Activated CD4-positive, alpha-beta T cell treated with anti-CD3 and anti-CD28 coated beads for 36 hours (primary cell): ENCODE measurements at regions of chr7 and their contacts with region 1.

Region 1: DNA sequence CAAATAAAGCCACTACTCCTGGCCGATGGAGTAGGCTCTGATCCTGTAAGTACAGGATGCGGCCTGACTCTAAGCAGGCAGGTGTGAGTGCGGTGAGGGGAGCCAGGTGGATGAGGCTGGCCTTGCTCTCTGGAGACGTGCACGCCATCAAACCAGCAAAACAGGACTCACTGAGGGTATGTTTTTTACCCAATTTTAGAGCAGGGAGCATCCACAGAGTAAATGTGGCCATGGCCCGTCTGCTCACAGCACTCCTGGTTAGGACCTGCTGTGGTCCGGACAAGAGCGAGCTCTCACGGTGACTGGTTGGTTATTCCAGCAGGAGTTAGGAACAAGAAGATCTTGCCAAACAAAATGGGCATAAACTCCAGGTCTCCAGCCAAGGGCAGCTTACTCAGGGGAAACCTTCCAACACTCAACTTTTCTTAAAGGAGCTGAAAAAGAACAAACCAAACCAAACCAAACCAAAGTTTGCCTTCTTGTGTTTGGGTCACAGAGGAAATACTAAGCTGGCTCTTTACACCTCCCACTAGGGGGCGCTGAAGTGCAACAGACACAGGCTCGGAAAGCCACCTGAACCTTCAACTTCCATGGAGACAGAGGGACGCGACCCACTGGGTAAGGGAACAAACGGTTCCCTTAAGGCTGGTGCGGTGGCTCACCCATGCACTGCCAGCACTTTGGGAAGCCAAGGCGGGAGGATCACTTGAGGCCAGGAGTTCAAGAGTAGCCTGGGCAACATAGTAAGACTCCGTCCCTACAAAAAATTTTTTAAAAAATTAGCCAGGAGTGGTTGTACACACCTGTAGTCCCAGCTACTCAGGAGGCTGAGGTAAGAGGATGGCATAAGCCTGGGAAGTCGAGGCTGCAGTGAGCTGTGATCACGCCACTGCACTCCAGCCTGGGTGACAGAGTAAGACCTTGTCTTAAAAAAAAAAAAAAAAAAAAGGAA is 122.4 kb downstream of the CLEC2L start:
- DNase-seq: peak; percentile 92
- ATAC-seq: peak; percentile 43
- H3K4me3 Mint-ChIP-seq: no peak overlapping the region
- H3K27ac Mint-ChIP-seq: peak overlapping the region; percentile 38
- H3K4me1 Mint-ChIP-seq: peaks cover 82% of the 10 kb centered on the region
- H3K27me3 Mint-ChIP-seq: no peaks in the 10 kb centered on the region

Region 2: DNA sequence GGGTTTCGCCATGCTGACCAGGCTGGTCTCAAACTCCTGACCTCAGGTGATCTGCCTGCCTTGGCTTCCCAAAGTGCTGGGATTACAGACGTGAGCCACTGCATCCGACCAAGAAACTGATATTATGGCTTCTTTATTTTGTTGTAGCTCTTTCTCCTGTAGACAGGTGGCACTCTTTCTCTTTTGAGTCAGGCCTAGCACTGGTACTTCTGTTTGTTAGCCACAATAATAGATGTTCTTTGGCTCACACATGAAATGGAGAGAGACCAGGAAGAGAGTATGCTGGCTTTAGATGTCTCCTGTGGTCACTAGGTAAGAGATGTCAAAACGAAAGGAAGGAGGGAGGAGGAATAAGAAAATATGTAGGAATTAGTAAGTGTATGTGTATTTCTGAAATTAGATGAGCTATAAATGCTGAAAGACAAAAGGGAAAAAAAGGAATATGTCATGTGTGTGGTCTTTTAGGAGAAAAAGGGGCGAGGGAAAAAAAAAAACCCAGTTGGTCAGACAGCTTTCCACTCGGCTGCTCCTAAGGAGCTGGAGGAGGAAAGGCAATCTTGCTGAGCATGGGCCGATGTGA is 43.6 kb before region 1 on chr7:
- CTCF ChIA-PET with region 1: interaction called, 15 read pairs
- POLR2A ChIA-PET with region 1: interaction called, 4 read pairs
- intact Hi-C with region 1: loop called in 1 of 2 experiments (anchors 2 kb)
- DNase-seq: no peak
- ATAC-seq: peak; percentile 83
- H3K4me3 Mint-ChIP-seq: no peak overlapping the region
- H3K27ac Mint-ChIP-seq: no peak overlapping the region
- H3K4me1 Mint-ChIP-seq: no peaks in the 10 kb centered on the region
- H3K27me3 Mint-ChIP-seq: no peaks in the 10 kb centered on the region

Region 3: DNA sequence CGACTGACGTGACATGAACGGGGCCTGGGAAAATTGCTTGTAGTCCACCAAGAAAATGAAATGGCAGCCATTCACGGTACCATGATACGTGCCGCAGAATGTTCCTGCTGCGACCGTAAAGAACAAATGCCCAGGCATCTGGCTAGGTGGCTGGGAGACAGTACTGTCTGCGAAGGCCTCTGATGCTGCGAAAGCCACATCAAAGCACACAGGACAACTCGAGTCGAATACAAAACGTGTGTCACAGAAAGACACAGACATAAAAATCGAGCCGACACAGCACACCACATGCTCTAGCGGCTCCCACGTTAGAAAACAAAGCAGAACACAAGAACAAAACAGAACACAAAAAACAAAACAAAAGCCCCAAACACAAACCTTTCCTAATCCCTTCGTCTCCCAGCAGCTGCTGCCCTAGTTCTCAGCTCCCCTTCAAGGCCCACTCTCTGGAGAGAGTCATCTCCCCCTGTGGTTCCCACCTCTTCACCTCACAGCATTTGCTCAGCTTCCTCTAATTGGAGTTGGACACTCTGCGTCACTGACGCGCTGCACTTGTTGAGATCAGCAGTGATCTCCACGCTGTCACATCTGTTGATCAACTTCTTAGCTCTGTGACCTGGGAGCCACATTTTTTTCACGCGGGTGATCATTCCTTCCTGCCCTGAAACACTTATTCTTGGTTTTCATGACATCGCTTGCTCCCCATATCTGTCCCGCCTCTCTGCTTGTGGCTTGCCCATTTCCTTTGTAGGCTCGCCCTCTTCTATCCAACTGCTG is 10.1 kb before region 1 on chr7:
- CTCF ChIA-PET with region 1: interaction called, 44 read pairs
- POLR2A ChIA-PET with region 1: interaction called, 5 read pairs
- intact Hi-C with region 1: no loop called
- DNase-seq: peak; percentile 88
- ATAC-seq: peak; percentile 93
- H3K4me3 Mint-ChIP-seq: peak overlapping the region; percentile 74
- H3K27ac Mint-ChIP-seq: peak overlapping the region; percentile 96
- H3K4me1 Mint-ChIP-seq: peaks cover 66% of the 10 kb centered on the region
- H3K27me3 Mint-ChIP-seq: no peaks in the 10 kb centered on the region

Region 4: DNA sequence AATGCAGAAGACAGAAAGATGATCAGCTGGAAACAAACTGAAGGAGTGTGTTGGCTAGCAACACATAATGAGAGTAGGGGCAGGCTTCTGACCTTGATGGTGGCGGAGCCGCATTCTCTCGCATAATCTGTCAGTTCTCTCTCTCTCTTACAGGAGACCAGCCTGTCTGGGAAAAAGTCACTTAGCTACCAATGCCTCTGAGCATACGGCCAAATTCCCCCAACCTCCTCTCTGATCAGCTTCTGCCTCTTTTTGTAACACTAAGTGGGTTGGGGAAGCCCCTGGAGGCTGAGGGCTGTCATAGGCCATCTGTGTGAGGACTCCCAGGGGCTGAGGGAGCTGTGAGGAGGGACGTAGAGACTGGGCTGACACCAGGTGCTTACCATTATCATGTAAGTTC is 27.4 kb after region 1 on chr7:
- CTCF ChIA-PET with region 1: interaction called, 94 read pairs
- POLR2A ChIA-PET with region 1: no interaction called
- intact Hi-C with region 1: loop called (anchors 1 to 2 kb)
- DNase-seq: peak; percentile 75
- ATAC-seq: peak; percentile 89
- H3K4me3 Mint-ChIP-seq: peak overlapping the region; percentile 3
- H3K27ac Mint-ChIP-seq: peak overlapping the region; percentile 88
- H3K4me1 Mint-ChIP-seq: peaks cover 56% of the 10 kb centered on the region
- H3K27me3 Mint-ChIP-seq: no peaks in the 10 kb centered on the region

Region 5: GRCh38 chr7:139771001-139771970 is 125.4 kb after region 1 on chr7:
- CTCF ChIA-PET with region 1: interaction called, 10 read pairs
- POLR2A ChIA-PET with region 1: interaction called, 4 read pairs
- intact Hi-C with region 1: loop called (anchors 2 kb)
- DNase-seq: no peak
- ATAC-seq: peak; percentile 37
- H3K4me3 Mint-ChIP-seq: peak overlapping the region; percentile 5
- H3K27ac Mint-ChIP-seq: peak overlapping the region; percentile 79
- H3K4me1 Mint-ChIP-seq: peaks cover 90% of the 10 kb centered on the region
- H3K27me3 Mint-ChIP-seq: no peaks in the 10 kb centered on the region

Region 6: DNA sequence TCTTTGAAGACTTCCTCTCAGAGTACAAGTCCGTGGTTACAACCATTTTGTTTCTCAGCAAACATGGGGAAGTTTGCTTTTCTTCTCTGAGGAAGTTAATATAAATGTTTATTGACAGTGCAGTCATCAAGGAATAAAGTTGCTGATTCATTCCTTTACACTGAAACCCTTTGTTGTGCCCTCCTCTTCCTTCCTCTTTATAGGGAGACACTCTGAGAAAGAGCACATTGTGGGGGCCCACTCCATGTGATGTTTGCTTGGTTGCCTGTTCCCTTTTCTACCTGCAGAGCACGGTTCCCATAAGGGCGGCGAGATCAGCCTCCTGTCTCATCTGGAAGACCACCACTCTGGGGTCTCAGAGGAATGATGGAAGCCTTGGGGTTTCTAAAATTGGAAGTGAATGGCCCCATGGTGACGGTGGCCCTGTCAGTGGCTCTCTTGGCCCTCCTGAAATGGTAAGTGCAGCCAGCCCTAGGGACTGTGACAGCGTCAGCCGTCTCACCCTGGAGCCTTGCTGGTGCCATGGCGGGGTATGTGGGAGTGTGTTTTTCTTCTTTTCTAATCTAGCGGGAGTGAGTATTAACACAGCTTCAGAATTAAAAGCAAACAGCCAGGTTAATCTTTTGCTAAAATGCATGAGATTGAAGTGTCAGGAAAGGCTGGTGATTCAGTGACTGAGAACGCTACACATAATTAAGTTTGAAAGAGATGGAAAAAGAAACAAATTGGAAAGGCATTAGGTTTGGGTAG is 183.4 kb after region 1 on chr7 and contains the start of gene TBXAS1:
- CTCF ChIA-PET with region 1: interaction called, 5 read pairs
- POLR2A ChIA-PET with region 1: no interaction called
- intact Hi-C with region 1: loop called (anchors 2 kb)
- DNase-seq: peak; percentile 42
- ATAC-seq: peak; percentile 64
- H3K4me3 Mint-ChIP-seq: peak within 1 kb of the TSS; percentile 72
- H3K27ac Mint-ChIP-seq: peak within 1 kb of the TSS; percentile 86
- H3K4me1 Mint-ChIP-seq: peaks cover 35% of the 10 kb centered on the region
- H3K27me3 Mint-ChIP-seq: no peaks in the 10 kb centered on the region
- total RNA-seq, gene TBXAS1: 3.6 to 5.1 TPM

Region 7: DNA sequence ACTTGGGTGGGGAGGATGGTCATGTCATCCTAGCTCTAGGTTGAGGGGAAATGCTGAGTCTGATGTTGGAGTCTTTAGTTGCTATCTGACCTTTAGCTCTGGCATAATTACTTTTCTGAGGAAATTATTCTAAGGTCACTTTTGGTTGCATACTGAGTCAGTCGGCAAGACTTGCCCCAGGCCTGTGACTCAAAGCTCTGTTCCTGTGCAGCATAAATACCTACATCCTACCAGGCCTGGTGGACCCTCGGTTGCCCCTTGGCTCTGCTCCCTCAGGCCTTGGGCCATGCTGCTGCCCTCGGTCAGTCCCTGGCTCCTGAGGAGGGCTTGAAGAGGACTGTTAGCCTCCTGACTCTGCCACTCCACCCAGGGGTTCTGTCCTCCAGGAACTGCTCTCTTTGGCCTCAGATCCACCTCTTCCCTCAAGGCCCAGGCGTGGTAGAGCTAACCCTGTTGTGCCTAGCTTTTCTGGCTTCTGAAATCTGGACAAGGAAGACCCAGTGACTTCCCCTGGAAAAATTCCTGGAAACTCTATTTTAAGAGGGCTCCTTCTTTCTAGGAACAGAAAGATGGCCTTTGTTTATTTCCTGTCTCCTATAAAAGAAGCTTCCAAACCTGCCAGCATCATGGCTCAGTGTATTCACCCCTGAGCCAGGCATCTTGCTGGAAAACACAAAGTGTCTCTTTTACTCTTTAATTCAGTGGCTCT is 1499.2 kb after region 1 on chr7:
- CTCF ChIA-PET with region 1: no interaction called
- POLR2A ChIA-PET with region 1: no interaction called
- intact Hi-C with region 1: no loop called
- DNase-seq: no peak
- ATAC-seq: no peak
- H3K4me3 Mint-ChIP-seq: no peak overlapping the region
- H3K27ac Mint-ChIP-seq: no peak overlapping the region
- H3K4me1 Mint-ChIP-seq: no peaks in the 10 kb centered on the region
- H3K27me3 Mint-ChIP-seq: peaks cover 4% of the 10 kb centered on the region